ENCODE measurements at regions of chr2 and their contacts with region 1.

Region 1: GRCh38 chr2:126776692-126777619 is 121.0 kb downstream of the GYPC start:
- DNase-seq: peak; percentile 86
- H3K4me3 Mint-ChIP-seq: peak overlapping the region; percentile 83
- H3K27ac Mint-ChIP-seq: peak overlapping the region; percentile 9
- H3K4me1 Mint-ChIP-seq: peaks cover 10% of the 10 kb centered on the region
- H3K27me3 Mint-ChIP-seq: no peaks in the 10 kb centered on the region

Region 2: GRCh38 chr2:126359494-126359893 is 417.5 kb before region 1 on chr2:
- CTCF ChIA-PET with region 1: interaction called, 6 read pairs
- intact Hi-C with region 1: loop called (anchors 5 kb)
- DNase-seq: no peak
- H3K4me3 Mint-ChIP-seq: no peak overlapping the region
- H3K27ac Mint-ChIP-seq: no peak overlapping the region
- H3K4me1 Mint-ChIP-seq: no peaks in the 10 kb centered on the region
- H3K27me3 Mint-ChIP-seq: peaks cover 4% of the 10 kb centered on the region

Region 3: GRCh38 chr2:126413079-126413478 is 363.9 kb before region 1 on chr2:
- CTCF ChIA-PET with region 1: interaction called, 4 read pairs
- intact Hi-C with region 1: loop called (anchors 1 kb)
- DNase-seq: no peak
- H3K4me3 Mint-ChIP-seq: no peak overlapping the region
- H3K27ac Mint-ChIP-seq: no peak overlapping the region
- H3K4me1 Mint-ChIP-seq: peaks cover 20% of the 10 kb centered on the region
- H3K27me3 Mint-ChIP-seq: no peaks in the 10 kb centered on the region

Region 4: DNA sequence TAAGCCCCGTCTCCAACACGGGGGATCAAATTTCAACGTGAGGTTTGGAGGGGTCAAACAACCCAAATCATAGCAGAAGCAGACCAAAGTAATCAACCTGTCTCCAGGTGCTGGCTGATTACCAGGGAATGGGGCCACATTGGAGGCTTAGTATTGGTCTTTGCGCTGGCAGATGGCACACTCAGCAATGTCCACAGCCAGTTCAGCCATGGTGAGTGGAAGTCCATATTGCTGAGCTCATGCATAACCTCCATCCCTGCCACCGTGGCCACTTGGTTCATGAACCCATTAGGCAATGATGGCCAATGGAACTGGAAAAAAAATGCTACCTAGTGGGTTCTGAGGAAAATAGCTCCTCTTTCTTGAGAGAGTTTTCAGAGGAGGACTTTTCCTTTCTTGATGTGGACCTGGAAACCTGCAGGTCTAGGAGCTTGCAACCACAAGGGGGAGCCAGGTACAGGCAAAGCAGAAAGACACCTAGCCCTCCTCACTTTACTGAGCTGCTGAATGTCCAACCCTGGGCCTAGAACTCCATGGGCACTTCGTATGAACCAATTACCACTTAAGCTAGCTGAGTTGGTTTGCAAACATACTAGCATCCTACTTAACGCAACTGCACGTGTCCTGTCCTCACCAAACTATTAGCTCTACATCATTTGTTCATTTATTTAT is 249.0 kb before region 1 on chr2:
- CTCF ChIA-PET with region 1: interaction called, 111 read pairs
- intact Hi-C with region 1: loop called (anchors 1 kb)
- DNase-seq: peak; percentile 83
- H3K4me3 Mint-ChIP-seq: no peak overlapping the region
- H3K27ac Mint-ChIP-seq: no peak overlapping the region
- H3K4me1 Mint-ChIP-seq: no peaks in the 10 kb centered on the region
- H3K27me3 Mint-ChIP-seq: no peaks in the 10 kb centered on the region

Region 5: GRCh38 chr2:126634273-126634861 is 142.6 kb before region 1 on chr2:
- CTCF ChIA-PET with region 1: interaction called, 12 read pairs
- intact Hi-C with region 1: no loop called
- DNase-seq: peak; percentile 45
- H3K4me3 Mint-ChIP-seq: no peak overlapping the region
- H3K27ac Mint-ChIP-seq: no peak overlapping the region
- H3K4me1 Mint-ChIP-seq: no peaks in the 10 kb centered on the region
- H3K27me3 Mint-ChIP-seq: no peaks in the 10 kb centered on the region

Region 6: GRCh38 chr2:126736133-126736874 is 40.7 kb before region 1 on chr2:
- CTCF ChIA-PET with region 1: no interaction called
- intact Hi-C with region 1: no loop called
- DNase-seq: no peak
- H3K4me3 Mint-ChIP-seq: no peak overlapping the region
- H3K27ac Mint-ChIP-seq: no peak overlapping the region
- H3K4me1 Mint-ChIP-seq: no peaks in the 10 kb centered on the region
- H3K27me3 Mint-ChIP-seq: no peaks in the 10 kb centered on the region

Region 7: GRCh38 chr2:126886211-126886915 is 109.4 kb after region 1 on chr2:
- CTCF ChIA-PET with region 1: no interaction called
- intact Hi-C with region 1: loop called (anchors 2 kb)
- DNase-seq: peak; percentile 70
- H3K4me3 Mint-ChIP-seq: no peak overlapping the region
- H3K27ac Mint-ChIP-seq: no peak overlapping the region
- H3K4me1 Mint-ChIP-seq: peaks cover 2% of the 10 kb centered on the region
- H3K27me3 Mint-ChIP-seq: peaks cover 13% of the 10 kb centered on the region

Region 8: GRCh38 chr2:127025359-127026166 is 248.6 kb after region 1 on chr2:
- CTCF ChIA-PET with region 1: no interaction called
- intact Hi-C with region 1: no loop called
- DNase-seq: peak; percentile 84
- H3K4me3 Mint-ChIP-seq: peak overlapping the region; percentile 72
- H3K27ac Mint-ChIP-seq: no peak overlapping the region
- H3K4me1 Mint-ChIP-seq: peaks cover 3% of the 10 kb centered on the region
- H3K27me3 Mint-ChIP-seq: no peaks in the 10 kb centered on the region

Measured in activated naive CD4-positive, alpha-beta T cell treated with anti-CD3 and anti-CD28 coated beads for 36 hours (primary cell).